ENCODE measurements at regions of chr19 and their contacts with region 1.

Region 1: GRCh38 chr19:33795370-33796163 is 1.1 kb upstream of the KCTD15 start:
- DNase-seq: peak; percentile 88
- H3K4me3 ChIP-seq: peak overlapping the region; percentile 64 to 86 (median 71)
- H3K27ac ChIP-seq: peak overlapping the region; percentile 83
- H3K4me1 ChIP-seq: peaks cover 17% of the 10 kb centered on the region
- H3K27me3 ChIP-seq: no peaks in the 10 kb centered on the region
- CTCF ChIP-seq: peak; percentile 74 to 85
- POLR2A ChIP-seq: peak; percentile 81

Region 2: DNA sequence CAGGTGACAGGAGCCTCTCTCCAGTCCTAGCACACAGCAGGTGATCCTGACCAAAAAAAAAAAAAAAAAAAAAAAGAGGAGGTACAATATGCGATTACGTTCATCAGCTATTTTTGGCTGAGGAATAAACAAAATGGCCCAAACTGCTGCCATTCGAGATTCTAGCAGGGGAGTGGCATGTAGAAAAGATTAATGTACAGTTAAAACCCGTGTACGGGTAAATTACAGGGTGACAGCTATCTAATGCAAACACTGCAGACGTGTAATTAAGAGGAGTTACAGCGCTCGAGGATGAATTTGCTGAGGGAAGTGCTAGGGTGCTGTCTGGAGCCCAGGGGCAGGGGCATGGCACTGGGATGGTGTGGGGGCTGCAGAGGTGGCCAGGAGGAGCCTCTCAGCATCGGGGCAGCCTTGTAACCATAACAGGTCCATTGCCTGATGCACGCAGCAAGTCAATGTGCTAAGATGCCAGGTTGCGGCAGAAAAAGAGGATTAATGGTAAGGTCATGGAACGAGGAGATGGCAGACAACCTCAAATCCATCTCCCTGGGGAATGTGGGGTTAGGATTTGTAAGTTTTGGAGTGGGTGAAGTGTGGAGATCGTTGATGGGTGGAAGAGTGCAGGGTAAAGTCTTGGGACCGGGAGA is 156.4 kb before region 1 on chr19:
- CTCF ChIA-PET with region 1: no interaction called
- POLR2A ChIA-PET with region 1: no interaction called
- dilution Hi-C with region 1: no loop called
- intact Hi-C with region 1: no loop called
- DNase-seq: no peak
- H3K4me3 ChIP-seq: no peak overlapping the region
- H3K27ac ChIP-seq: no peak overlapping the region
- H3K4me1 ChIP-seq: no peaks in the 10 kb centered on the region
- H3K27me3 ChIP-seq: no peaks in the 10 kb centered on the region
- CTCF ChIP-seq: no peak
- POLR2A ChIP-seq: no peak

Region 3: DNA sequence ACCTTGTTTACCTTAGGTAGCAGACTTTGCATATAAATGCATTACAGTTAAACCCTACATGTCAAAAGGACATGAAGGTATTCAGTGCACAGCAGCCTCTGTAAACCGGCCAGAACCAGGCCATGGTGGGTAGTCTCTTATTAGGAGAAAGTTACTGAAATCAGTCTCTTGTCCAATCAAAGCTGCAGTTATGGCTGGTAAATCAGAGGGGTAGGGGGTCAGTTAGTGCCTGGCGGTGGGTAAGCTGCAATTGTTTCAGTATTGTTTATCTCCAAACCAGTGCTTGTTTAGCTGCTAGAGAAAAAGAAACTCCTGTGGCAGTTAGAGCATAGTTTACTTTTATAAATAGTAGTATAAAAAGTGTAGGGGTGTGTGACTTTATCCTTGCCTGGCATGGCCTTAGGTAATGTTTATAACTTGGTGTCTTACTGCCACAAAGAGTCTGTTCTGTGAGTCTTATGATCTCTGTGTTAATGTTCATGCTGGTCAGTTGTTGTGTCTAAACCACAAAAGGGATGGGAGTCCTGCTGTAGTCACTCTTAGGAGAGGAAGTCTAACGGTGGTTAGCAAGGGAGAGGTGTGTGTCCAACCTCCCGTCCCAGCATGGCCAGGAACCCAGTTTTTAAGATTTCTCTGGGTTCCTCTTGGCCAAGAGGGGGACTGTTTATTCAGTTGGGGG is 145.8 kb before region 1 on chr19:
- CTCF ChIA-PET with region 1: no interaction called
- POLR2A ChIA-PET with region 1: no interaction called
- dilution Hi-C with region 1: no loop called
- intact Hi-C with region 1: no loop called
- DNase-seq: no peak
- H3K4me3 ChIP-seq: no peak overlapping the region
- H3K27ac ChIP-seq: no peak overlapping the region
- H3K4me1 ChIP-seq: no peaks in the 10 kb centered on the region
- H3K27me3 ChIP-seq: no peaks in the 10 kb centered on the region
- CTCF ChIP-seq: no peak
- POLR2A ChIP-seq: no peak

Region 4: GRCh38 chr19:33763633-33764371 is 31.8 kb before region 1 on chr19:
- CTCF ChIA-PET with region 1: no interaction called
- POLR2A ChIA-PET with region 1: no interaction called
- dilution Hi-C with region 1: no loop called
- intact Hi-C with region 1: no loop called
- DNase-seq: no peak
- H3K4me3 ChIP-seq: no peak overlapping the region
- H3K27ac ChIP-seq: no peak overlapping the region
- H3K4me1 ChIP-seq: no peaks in the 10 kb centered on the region
- H3K27me3 ChIP-seq: no peaks in the 10 kb centered on the region
- CTCF ChIP-seq: no peak
- POLR2A ChIP-seq: no peak

Region 5: DNA sequence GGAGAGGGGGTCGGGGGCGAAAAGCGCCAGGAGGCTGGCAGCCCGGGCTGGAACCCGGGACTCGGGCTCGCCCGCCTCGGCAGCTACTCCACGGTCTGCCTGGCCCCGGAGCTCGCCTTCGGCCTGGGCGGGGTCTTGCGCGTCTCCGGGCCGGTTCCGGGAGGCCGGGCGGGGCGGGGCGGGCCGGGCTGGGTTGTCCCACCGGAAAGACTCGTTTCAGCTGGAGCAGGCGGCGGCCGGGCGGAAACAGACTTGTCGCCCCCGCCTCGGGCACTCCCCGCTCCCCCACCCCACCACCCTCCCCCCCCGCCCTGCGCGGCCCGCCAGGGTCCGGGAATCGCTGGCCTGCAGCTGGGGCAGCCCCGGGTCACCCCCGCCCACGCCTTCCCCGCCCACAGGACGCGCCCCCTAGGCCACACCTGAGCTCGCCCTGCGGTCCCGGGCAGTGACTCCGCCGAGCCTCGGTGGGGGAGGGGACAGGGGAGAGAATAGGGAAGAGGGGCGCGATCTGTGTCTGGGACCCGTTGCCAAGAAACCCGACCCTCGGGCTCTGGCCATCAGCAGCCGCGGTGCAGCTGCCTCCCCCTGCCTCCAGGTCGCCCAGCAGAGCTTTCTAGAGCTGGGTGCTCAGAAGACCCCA is 110.5 kb after region 1 on chr19:
- CTCF ChIA-PET with region 1: interaction called, 9 read pairs
- POLR2A ChIA-PET with region 1: interaction called, 4 read pairs
- dilution Hi-C with region 1: no loop called
- intact Hi-C with region 1: loop called (anchors 1 kb)
- DNase-seq: peak; percentile 22
- H3K4me3 ChIP-seq: peak overlapping the region in 2 of 3 experiments; percentile 2 to 24
- H3K27ac ChIP-seq: peak overlapping the region; percentile 83
- H3K4me1 ChIP-seq: peaks cover 20% of the 10 kb centered on the region
- H3K27me3 ChIP-seq: peaks cover 0 to 2% of the 10 kb centered on the region in 2 experiments
- CTCF ChIP-seq: no peak
- POLR2A ChIP-seq: no peak

Region 6: GRCh38 chr19:33998739-33999345 is 203.3 kb after region 1 on chr19:
- CTCF ChIA-PET with region 1: interaction called, 37 read pairs
- POLR2A ChIA-PET with region 1: no interaction called
- dilution Hi-C with region 1: no loop called
- intact Hi-C with region 1: loop called (anchors 1 kb)
- DNase-seq: peak; percentile 21
- H3K4me3 ChIP-seq: no peak overlapping the region
- H3K27ac ChIP-seq: no peak overlapping the region
- H3K4me1 ChIP-seq: no peaks in the 10 kb centered on the region
- H3K27me3 ChIP-seq: peaks cover 3 to 6% of the 10 kb centered on the region in 2 experiments
- CTCF ChIP-seq: peak; percentile 11 to 17
- POLR2A ChIP-seq: no peak

Region 7: DNA sequence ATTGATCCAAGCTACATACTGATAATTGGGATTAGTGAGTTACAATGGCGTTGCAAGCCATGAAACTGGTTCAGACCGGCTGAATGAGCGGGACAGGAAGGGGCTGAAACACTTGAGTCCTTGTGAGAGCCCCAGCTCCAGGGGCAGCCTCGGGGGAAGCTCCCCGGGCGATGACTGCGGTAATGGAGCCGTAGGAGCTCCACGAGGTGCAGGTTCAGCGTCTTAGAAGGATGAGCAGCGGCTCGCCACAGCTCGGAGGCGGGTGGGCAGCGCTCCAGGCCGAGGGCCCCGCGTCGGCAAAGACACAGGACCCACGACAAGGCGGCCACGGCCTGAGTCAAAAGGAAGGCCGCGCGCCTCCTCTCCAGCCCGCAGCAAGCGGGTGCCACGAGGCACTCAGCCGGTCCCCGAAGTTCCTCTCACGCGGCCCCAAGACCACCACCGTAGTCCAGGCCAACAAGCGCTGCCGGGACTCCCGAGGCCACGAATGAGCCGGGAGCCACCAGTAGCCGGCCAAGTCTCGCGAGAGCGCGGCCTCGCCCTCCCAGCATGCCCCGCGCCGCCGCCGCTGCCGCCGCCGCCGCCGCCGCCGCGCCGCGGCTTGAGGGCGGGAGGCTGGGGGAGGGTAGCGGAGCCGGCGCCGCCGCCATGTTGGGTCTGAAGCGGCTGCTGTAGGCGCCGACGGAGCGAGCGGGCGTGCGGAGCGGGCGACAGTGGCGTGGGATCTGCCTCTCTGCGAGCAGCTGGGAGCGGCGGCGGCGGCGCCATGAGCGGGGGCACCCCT is 376.5 kb after region 1 on chr19 and contains the start of gene LSM14A:
- CTCF ChIA-PET with region 1: no interaction called
- POLR2A ChIA-PET with region 1: no interaction called
- dilution Hi-C with region 1: no loop called
- intact Hi-C with region 1: loop called (anchors 5 kb)
- DNase-seq: peak; percentile 85
- H3K4me3 ChIP-seq: peak within 1 kb of the TSS; percentile 70 to 96 (median 80)
- H3K27ac ChIP-seq: peak within 1 kb of the TSS; percentile 97
- H3K4me1 ChIP-seq: peaks cover 35% of the 10 kb centered on the region
- H3K27me3 ChIP-seq: peaks cover 3 to 6% of the 10 kb centered on the region in 2 experiments
- CTCF ChIP-seq: no peak
- POLR2A ChIP-seq: peak; percentile 96
- total RNA-seq, gene LSM14A: 114 and 122 TPM in 2 replicates

Measured in endothelial cell of umbilical vein (primary cell).